Astrocyte of the cerebellum (primary cell): ENCODE measurements at regions of chr17 and their contacts with region 1.

Region 1: GRCh38 chr17:4035081-4035680 is 70.9 kb upstream of the ATP2A3 start:
- DNase-seq: no peak
- H3K4me3 ChIP-seq: no peak overlapping the region
- CTCF ChIP-seq: no peak

Region 2: GRCh38 chr17:3983606-3984484 is 51.3 kb before region 1 on chr17:
- in situ Hi-C with region 1: no loop called
- DNase-seq: no peak
- H3K4me3 ChIP-seq: no peak overlapping the region
- CTCF ChIP-seq: no peak

Region 3: GRCh38 chr17:4074831-4075495 is 39.8 kb after region 1 on chr17:
- in situ Hi-C with region 1: loop called (anchors 5 kb)
- DNase-seq: peak; percentile 13
- H3K4me3 ChIP-seq: no peak overlapping the region
- CTCF ChIP-seq: peak; percentile 73

Region 4: GRCh38 chr17:4090898-4091297 is 55.7 kb after region 1 on chr17:
- in situ Hi-C with region 1: loop called (anchors 10 kb)
- DNase-seq: no peak
- H3K4me3 ChIP-seq: no peak overlapping the region
- CTCF ChIP-seq: no peak